Dorsolateral prefrontal cortex (tissue), 120 donors: ENCODE measurements at regions of chr14 and their contacts with region 1.

Region 1: DNA sequence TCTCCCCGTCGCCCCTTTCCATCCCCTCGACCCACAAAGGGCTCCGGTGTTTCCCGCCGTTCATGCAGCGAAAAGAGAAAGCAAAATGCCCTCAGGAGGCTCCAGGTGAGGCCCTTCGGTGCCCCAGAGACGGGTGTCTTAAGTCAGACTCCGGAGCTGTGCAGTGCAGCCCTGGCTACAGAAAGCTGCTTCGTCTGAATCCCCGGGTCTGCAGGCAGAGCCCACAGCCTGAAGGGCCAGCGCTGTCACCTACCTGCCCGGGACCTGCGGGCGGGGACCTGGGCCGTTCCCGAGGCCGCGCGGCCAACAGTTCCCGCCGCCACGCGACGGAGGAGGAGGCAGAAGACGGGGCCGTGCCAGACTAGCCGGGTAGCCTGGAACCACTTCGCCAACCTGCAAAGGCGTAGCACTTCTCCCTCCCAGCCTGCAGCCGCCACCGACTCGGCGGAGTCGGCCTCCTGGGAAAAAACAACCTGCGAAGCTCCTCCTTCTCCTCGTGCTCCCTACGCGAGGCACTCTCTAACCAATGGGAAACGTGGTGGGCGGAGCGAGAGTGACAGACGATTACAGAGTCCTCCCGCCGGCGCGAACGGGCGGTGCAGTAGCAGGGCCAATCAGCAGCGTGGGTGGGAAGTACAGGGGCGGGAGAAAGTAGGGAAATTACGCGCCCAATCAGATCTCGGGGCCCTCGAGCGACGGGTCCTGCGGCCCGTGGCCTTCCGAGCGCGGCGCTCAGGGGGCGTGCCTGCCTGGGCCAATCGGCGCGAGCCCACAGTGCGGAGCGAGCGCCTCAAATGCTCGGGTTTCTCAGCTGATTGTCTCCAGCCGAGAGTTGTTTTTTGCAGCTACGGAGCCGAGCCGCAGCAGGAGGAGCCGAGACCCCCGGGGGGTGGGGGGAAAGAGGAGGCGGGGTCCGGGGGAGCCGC is at the starts of genes GPR137C and TXNDC16:
- DNase-seq: peak; percentile 100
- H3K4me3 ChIP-seq: peak within 1 kb of the TSS; percentile 75 to 100 (median 95)
- H3K27ac ChIP-seq: peak within 1 kb of the TSS; percentile 16 to 95 (median 88)
- H3K27me3 ChIP-seq: no peaks in the 10 kb centered on the region
- CTCF ChIP-seq: peak in 12 of 56 donors; percentile 2 to 48 (median 20)
- total RNA-seq, gene GPR137C: 9.7 to 41.2 (median 21.6) TPM
- total RNA-seq, gene TXNDC16: 16.1 to 34.2 (median 24.0) TPM

Region 2: GRCh38 chr14:52695481-52696091 is 143.3 kb after region 1 on chr14 and contains the start of gene ERO1A:
- intact Hi-C with region 1: loop called in 1 of 2 experiments (anchors 1 kb)
- DNase-seq: peak; percentile 54 to 85 (median 66)
- H3K4me3 ChIP-seq: peak within 1 kb of the TSS; percentile 75 to 99 (median 93)
- H3K27ac ChIP-seq: peak within 1 kb of the TSS; percentile 56 to 98 (median 90)
- H3K27me3 ChIP-seq: no peaks in the 10 kb centered on the region
- CTCF ChIP-seq: peak in 3 of 56 donors; percentile 7 to 30 (median 9)
- total RNA-seq, gene ERO1A: 23.4 to 69.4 (median 42.5) TPM

Region 3: DNA sequence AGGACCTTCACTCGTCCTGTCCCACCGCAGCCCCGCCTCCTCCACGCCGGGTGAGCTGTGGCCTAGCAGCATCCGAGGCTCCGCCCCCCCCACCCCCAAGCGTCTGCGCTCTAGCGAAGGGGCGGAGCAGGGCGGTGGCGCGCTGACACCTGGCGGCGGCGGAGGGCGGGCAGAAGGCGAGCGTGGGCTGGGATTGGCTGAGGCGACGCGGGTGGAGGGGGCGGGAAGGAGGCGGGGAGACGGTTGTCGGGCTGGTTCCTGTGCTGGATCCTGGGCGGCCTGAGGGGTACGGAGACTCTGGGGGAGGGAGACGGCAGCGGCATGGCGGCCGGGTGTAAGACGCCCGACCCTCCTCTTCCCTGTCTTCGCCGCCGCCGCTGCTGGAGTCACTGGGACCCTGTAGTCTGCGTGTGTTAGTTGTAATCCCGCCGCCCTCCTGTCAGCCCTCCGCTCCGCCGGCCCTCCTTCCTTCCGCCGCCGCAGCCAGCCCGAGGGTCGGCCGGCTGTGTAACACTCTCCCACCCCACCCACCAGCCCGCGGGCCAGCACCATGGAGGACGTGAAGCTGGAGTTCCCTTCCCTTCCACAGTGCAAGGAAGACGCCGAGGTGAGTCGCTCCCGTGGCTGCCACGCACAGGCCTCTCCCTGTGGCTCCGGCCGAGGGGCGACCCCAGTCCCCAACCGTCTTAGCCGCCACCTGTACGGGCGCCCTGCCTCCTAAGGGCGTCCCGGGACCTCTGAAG is 177.8 kb after region 1 on chr14 and contains the start of gene STYX:
- intact Hi-C with region 1: loop called in 1 of 2 experiments (anchors 10 kb)
- DNase-seq: peak; percentile 90 to 98 (median 96)
- H3K4me3 ChIP-seq: peak within 1 kb of the TSS; percentile 70 to 99 (median 94)
- H3K27ac ChIP-seq: peak within 1 kb of the TSS in 58 of 59 donors; percentile 22 to 92 (median 78)
- H3K27me3 ChIP-seq: no peaks in the 10 kb centered on the region
- CTCF ChIP-seq: peak in 50 of 56 donors; percentile 11 to 71 (median 40)
- total RNA-seq, gene STYX: 5.3 to 12.8 (median 7.4) TPM

Region 4: DNA sequence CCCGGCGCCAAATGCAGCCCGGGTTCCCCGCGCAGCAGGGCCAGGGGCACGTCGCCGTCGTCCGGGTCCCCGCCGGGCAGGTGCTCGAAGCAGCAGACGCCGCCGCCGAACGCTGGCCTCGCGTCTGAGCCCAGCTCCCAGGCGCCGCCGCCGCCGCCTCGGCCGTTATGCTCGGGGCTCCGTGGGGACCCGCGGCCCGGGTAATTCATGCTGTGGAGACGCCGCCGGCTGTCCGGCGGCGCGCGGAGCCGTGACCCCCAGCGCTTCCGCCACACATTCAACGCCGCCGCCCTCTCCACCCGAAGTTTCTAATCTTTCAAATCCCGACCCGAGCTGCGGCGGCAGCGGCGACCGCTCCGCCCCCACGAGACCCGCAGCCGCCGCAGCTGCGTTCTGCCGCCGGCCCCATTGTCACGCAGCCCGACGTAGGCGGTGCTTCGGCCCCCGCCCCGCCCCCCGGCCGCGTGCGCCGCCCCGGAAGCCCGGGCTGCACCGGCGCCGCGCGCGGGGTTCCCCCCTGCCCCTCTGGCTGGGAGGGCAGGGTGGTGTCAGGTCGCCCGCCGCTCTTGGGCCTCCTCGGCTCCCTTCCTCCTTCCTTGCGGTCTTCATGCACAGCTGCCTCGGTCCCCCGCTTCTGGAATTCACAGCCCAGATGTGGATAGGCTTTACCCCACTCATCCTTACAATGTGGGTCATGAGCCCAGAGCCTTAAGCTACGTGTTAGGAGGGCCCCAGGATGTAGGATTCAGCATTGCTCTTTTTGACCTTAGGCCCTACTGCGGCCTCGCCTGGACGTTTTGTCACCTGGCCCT is 600.8 kb after region 1 on chr14 and contains the start of gene DDHD1:
- intact Hi-C with region 1: loop called in 1 of 2 experiments (anchors 5 kb)
- DNase-seq: peak; percentile 58 to 88 (median 68)
- H3K4me3 ChIP-seq: peak within 1 kb of the TSS; percentile 65 to 98 (median 90)
- H3K27ac ChIP-seq: peak within 1 kb of the TSS; percentile 42 to 96 (median 89)
- H3K27me3 ChIP-seq: no peaks in the 10 kb centered on the region
- CTCF ChIP-seq: peak in 15 of 56 donors; percentile 7 to 46 (median 20)
- total RNA-seq, gene DDHD1: 26.9 to 70.6 (median 49.7) TPM